Heart left ventricle (tissue), 16 donors: ENCODE measurements at regions of chr9 and their contacts with region 1.

Region 1: GRCh38 chr9:36008774-36009300 is 27.9 kb upstream of the RECK start:
- DNase-seq: peak in 4 of 5 donors; percentile 15 to 56 (median 47)
- ATAC-seq: peak; percentile 64 to 96 (median 72)
- H3K4me3 ChIP-seq: peak overlapping the region in 1 of 12 donors; percentile 5
- H3K27ac ChIP-seq: no peak overlapping the region
- H3K4me1 ChIP-seq: peaks cover 0 to 4% (median 0%) of the 10 kb centered on the region in 12 donors
- H3K27me3 ChIP-seq: no peaks in the 10 kb centered on the region
- CTCF ChIP-seq: peak; percentile 67 to 100 (median 96)
- POLR2A ChIP-seq: no peak

Region 2: GRCh38 chr9:35220659-35221338 is 788.0 kb before region 1 on chr9:
- intact Hi-C with region 1: no loop called
- DNase-seq: no peak
- ATAC-seq: peak in 3 of 4 donors; percentile 66 to 71 (median 68)
- H3K4me3 ChIP-seq: peak overlapping the region in 1 of 12 donors; percentile 12
- H3K27ac ChIP-seq: peak overlapping the region in 3 of 12 donors; percentile 6 to 58 (median 51)
- H3K4me1 ChIP-seq: peaks cover 0 to 3% (median 0%) of the 10 kb centered on the region in 12 donors
- H3K27me3 ChIP-seq: no peaks in the 10 kb centered on the region
- CTCF ChIP-seq: no peak
- POLR2A ChIP-seq: no peak

Region 3: DNA sequence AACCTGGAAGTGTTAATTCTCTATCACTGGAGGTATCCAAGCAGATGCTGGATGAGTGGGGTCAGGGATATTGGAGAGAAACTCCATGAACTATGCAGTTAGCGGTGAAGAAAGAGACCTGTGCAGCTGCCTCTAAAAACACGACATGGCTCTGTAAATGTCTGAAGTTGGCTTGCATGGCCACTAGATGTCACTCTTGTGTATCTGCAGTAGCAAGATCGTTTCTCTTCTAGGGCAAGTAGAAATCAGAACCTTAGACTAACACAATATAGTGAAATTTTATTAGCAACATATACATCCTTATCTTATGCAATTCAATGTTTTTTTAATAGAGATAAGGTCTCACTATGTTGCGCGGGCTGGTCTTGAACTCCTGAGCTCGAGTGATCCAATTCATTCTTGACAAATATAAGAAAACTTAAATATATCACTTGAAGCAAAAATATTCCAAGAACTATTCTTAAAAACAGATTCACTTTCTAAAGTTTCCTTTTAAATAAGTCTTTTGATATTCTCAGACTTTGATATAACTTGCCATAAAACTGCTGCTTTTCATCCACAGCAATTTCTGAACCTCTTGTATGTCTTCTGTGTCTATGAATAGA is 53.8 kb before region 1 on chr9:
- intact Hi-C with region 1: loop called in 1 of 10 experiments (anchors 5 kb)
- DNase-seq: peak in 2 of 5 donors; percentile 50 to 54
- ATAC-seq: peak in 3 of 4 donors; percentile 75 to 84 (median 79)
- H3K4me3 ChIP-seq: no peak overlapping the region
- H3K27ac ChIP-seq: no peak overlapping the region
- H3K4me1 ChIP-seq: peaks cover 0 to 10% (median 0%) of the 10 kb centered on the region in 12 donors
- H3K27me3 ChIP-seq: peaks cover 0 to 6% (median 0%) of the 10 kb centered on the region in 9 donors
- CTCF ChIP-seq: peak; percentile 83 to 94 (median 88)
- POLR2A ChIP-seq: no peak

Region 4: DNA sequence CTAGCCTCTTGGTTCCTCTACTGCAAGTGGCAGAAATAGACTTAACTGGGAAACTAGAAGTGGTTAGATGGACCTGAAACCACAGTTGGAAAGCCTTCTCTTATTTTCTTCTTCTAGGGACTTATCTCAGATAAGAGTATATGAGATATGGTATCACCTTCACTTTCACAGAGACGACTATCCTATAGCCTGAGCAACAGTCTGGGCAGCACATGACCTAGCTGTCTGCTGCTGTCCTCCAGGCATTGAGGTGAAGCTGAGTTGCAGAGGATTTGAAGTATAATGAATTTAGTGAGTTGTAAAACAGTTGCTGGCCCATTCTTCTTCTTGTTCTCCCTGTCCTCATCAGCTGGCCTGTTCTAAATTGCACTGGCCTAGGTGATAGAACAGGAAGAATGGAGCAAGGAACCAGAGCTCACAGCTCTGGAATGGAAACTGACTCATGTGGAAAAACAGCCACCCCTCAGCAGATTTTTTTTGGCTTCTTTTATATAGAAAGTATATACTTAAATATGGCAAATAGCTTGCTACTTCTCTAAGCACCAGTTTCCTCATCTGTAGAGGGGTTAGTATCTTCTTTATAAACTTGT is 55.7 kb after region 1 on chr9:
- intact Hi-C with region 1: loop called in 1 of 10 experiments (anchors 5 kb)
- DNase-seq: no peak
- ATAC-seq: no peak
- H3K4me3 ChIP-seq: no peak overlapping the region
- H3K27ac ChIP-seq: no peak overlapping the region
- H3K4me1 ChIP-seq: peaks cover 0 to 7% (median 0%) of the 10 kb centered on the region in 12 donors
- H3K27me3 ChIP-seq: no peaks in the 10 kb centered on the region
- CTCF ChIP-seq: no peak
- POLR2A ChIP-seq: no peak

Region 5: DNA sequence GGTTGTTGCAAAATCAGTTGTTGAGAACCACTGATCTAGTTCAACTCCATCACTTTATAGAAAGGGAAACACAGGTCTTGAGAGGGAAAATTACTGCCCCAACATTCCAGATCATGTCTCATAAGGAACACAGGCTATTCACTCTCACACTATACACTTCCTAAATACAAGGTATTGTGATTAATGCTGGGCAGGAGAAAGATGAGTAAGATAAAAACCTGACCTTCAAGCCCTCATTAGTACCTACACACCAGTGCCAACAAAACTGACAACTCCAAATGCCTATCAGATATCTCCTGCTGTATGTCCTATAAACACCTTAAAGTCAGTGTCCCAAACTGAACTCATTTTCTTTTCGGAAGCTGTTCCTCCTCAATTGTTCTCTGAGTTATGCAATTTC is 241.2 kb after region 1 on chr9:
- intact Hi-C with region 1: no loop called
- DNase-seq: no peak
- ATAC-seq: no peak
- H3K4me3 ChIP-seq: no peak overlapping the region
- H3K27ac ChIP-seq: no peak overlapping the region
- H3K4me1 ChIP-seq: peaks cover 0 to 22% (median 3%) of the 10 kb centered on the region in 12 donors
- H3K27me3 ChIP-seq: no peaks in the 10 kb centered on the region
- CTCF ChIP-seq: no peak
- POLR2A ChIP-seq: no peak